Head of caudate nucleus (tissue), 42 donors: ENCODE measurements at regions of chr21 and their contacts with region 1.

Region 1: GRCh38 chr21:26267389-26267788 is 96.8 kb upstream of the APP start:
- DNase-seq: no peak

Region 2: GRCh38 chr21:26495283-26495845 is 228.0 kb after region 1 on chr21:
- intact Hi-C with region 1: loop called (anchors 5 kb)
- DNase-seq: no peak